ENCODE measurements at regions of chr15 and their contacts with region 1.

Region 1: GRCh38 chr15:74956648-74957300 is at the start of gene RPP25:
- DNase-seq: peak; percentile 86 to 94
- ATAC-seq: peak; percentile 87 to 93
- H3K4me3 ChIP-seq: peak within 1 kb of the TSS; percentile 53
- H3K27ac ChIP-seq: peak within 1 kb of the TSS; percentile 82 to 92
- H3K4me1 ChIP-seq: peaks cover 44% of the 10 kb centered on the region
- CTCF ChIP-seq: no peak
- EP300 ChIP-seq: no peak
- POLR2A ChIP-seq: peak; percentile 95
- RAD21 ChIP-seq: 0 out of 5 replicates have a peak, but pooled peaks have one; percentile 2 to 9
- polyA plus RNA-seq, gene RPP25: 8.8 and 9.3 TPM in 2 replicates

Region 2: DNA sequence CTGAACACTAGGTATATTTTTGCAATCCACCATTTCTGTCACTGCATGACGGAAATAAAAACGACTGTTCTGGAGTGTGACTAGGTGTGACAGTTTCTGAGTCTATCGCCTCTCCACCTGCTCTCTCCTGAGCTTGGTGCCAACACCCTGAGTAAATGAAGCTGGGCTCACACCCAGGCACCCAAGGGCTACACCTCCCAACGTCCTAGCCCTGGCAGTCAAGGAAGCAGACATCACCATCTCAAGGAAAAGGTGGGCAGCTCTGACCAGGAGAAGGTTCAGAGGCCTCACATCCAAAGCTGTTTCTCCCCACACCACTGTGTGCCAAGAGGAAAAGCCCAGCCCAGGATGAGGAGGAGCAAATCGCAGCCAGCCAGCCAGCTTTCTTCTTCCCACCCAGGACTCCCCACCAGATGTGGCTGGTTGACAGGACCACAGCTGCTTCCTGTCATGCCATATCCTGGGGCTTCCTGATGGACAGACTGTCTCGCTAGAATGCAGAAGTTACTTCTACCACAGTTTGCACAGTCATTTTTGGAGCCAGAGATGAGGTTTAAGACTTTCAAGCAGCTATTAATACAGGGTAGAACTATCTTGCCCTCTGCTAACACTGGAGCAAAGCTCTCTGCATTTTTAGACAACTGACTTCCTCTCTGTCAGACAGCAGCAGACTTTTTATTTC is 86.9 kb before region 1 on chr15:
- CTCF ChIA-PET with region 1: no interaction called
- POLR2A ChIA-PET with region 1: no interaction called
- DNase-seq: no peak
- ATAC-seq: no peak
- H3K4me3 ChIP-seq: no peak overlapping the region
- H3K27ac ChIP-seq: no peak overlapping the region
- H3K4me1 ChIP-seq: peaks cover 50% of the 10 kb centered on the region
- CTCF ChIP-seq: no peak
- EP300 ChIP-seq: no peak
- POLR2A ChIP-seq: no peak
- RAD21 ChIP-seq: no peak

Region 3: DNA sequence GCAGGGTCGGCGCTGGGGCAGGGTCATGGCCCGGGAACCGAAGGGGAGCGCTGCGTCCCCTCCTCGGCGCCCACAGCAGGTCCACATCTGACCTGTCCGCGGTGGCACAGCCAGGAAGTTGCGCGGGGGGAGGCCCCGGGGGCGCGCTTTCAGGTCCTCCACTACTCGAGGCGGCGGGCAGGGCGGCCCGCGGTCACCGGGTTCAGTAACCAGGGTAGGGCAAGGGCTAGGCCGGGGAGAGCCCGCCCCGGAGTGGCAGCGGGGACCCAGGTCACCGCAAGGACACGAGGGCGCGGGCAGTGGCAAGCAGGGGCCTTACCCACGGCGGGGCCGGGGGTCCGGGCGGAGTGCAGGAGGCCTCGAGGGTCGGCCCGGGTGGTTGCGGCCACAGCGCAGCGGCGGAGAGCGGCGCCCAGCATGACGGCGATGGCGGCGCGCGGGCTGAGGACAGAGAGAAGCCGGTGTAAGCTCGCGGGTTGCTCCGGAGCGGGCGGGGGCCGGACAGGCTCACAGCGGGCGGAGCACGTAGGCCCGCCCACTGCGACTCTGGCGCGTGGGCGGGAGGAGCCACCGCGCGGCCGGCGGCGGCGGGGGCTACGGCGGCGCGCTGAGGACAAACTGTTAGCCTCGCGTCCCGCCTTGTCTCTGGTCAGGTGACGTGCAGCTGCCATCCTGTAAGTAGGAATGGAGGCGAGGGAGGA is 19.0 kb before region 1 on chr15 and contains the start of gene COX5A:
- CTCF ChIA-PET with region 1: interaction called, 50 read pairs
- POLR2A ChIA-PET with region 1: interaction called, 24 read pairs
- DNase-seq: peak; percentile 93 to 99
- ATAC-seq: peak; percentile 95
- H3K4me3 ChIP-seq: peak within 1 kb of the TSS; percentile 65
- H3K27ac ChIP-seq: peak within 1 kb of the TSS; percentile 88 to 95
- H3K4me1 ChIP-seq: peaks cover 9% of the 10 kb centered on the region; the same call in 1 of the 3 replicates
- CTCF ChIP-seq: no peak
- EP300 ChIP-seq: no peak
- POLR2A ChIP-seq: peak; percentile 96
- RAD21 ChIP-seq: no peak
- polyA plus RNA-seq, gene COX5A: 328 and 391 TPM in 2 replicates

Region 4: DNA sequence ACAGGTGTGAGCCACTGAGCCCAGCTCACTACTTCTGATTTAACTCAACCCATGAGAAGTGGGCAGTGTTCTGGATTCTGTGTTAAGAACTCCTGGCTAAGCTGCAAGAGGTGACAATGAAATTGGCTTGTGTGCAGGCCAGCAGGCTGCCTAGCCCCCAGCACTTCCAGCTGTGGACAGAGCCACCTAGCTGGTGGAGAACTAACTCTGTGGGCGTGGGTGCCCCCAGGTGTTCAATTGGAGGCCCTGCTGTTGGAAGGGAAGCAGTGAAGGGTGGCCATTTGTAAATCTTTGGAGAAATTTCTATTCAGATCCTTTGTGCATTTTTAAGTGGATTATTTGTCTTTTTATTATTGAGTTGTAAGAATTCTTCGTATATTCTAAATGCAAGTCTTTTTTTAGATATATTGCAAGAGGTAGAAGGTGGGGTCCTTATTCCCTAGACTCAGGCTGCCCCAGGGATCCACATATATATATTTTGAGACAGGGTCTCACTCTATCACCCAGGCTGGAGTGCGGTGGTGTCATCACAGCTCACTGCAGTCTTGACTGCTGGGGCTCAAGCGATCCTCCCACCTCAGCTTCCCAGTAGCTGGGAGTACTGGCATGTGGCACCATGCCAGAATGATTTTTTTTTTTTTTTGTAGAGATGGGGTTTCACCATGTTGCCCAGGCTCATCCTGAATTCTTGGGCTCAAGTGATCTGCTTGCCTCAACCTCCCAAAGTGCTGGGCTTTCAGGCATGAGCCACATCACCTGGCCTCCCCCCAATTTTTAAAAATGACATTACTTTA is 31.4 kb after region 1 on chr15:
- CTCF ChIA-PET with region 1: interaction called, 30 read pairs
- POLR2A ChIA-PET with region 1: interaction called, 10 read pairs
- DNase-seq: peak; percentile 64 to 78
- ATAC-seq: peak; percentile 95 to 97
- H3K4me3 ChIP-seq: no peak overlapping the region
- H3K27ac ChIP-seq: no peak overlapping the region
- H3K4me1 ChIP-seq: peaks cover 11% of the 10 kb centered on the region
- CTCF ChIP-seq: peak; percentile 68
- EP300 ChIP-seq: no peak
- POLR2A ChIP-seq: no peak
- RAD21 ChIP-seq: peak; percentile 79 to 84

Region 5: DNA sequence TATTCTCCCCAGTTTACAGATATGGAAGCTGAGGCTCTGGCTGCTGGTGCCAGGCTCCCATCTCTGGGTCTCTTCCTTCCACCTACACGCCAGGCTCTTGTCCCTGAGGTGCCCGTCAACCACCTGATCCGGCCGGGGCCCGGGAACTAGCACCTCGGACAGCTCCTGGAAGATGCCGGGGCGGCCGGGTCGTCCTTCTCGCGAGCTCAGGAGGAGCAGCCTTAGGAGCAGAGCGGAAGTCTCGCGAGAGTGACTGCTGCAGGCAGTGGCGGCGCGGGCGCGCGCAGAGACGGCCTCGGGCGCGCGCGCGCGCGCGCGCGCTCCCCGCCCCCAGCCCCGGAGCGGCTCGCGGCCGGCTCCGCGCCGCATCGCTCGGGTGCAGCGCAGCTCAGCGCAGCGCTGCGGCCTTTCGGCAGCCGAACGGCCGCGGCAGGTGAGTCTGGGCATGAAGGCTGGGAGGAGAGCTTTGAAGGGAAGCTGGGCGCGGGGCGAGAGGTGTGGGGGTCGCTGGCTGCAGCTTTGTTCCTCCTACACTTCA is 38.5 kb after region 1 on chr15 and contains the start of gene SCAMP5:
- CTCF ChIA-PET with region 1: interaction called, 20 read pairs
- POLR2A ChIA-PET with region 1: interaction called, 14 read pairs
- DNase-seq: peak; percentile 95 to 98
- ATAC-seq: peak; percentile 91 to 94
- H3K4me3 ChIP-seq: peak within 1 kb of the TSS; percentile 73
- H3K27ac ChIP-seq: peak within 1 kb of the TSS; percentile 80 to 89
- H3K4me1 ChIP-seq: peaks cover 7% of the 10 kb centered on the region; the same call in 2 of the 3 replicates
- CTCF ChIP-seq: no peak
- EP300 ChIP-seq: no peak
- POLR2A ChIP-seq: peak; percentile 65
- RAD21 ChIP-seq: no peak
- polyA plus RNA-seq, gene SCAMP5: 10.5 and 11.8 TPM in 2 replicates

Region 6: GRCh38 chr15:75023181-75023871 is 66.6 kb after region 1 on chr15 and contains the start of gene PPCDC:
- CTCF ChIA-PET with region 1: interaction called, 6 read pairs
- POLR2A ChIA-PET with region 1: interaction called, 25 read pairs
- DNase-seq: peak; percentile 97 to 100
- ATAC-seq: peak; percentile 98 to 99
- H3K4me3 ChIP-seq: peak within 1 kb of the TSS; percentile 71
- H3K27ac ChIP-seq: peak within 1 kb of the TSS; percentile 90 to 94
- H3K4me1 ChIP-seq: peaks cover 4% of the 10 kb centered on the region; the same call in 1 of the 3 replicates
- CTCF ChIP-seq: no peak
- EP300 ChIP-seq: no peak
- POLR2A ChIP-seq: peak; percentile 98
- RAD21 ChIP-seq: no peak
- polyA plus RNA-seq, gene PPCDC: 14.5 and 18.2 TPM in 2 replicates

Measured in A549 (cell line).